ENCODE measurements at regions of chr2 and their contacts with region 1.

Region 1: DNA sequence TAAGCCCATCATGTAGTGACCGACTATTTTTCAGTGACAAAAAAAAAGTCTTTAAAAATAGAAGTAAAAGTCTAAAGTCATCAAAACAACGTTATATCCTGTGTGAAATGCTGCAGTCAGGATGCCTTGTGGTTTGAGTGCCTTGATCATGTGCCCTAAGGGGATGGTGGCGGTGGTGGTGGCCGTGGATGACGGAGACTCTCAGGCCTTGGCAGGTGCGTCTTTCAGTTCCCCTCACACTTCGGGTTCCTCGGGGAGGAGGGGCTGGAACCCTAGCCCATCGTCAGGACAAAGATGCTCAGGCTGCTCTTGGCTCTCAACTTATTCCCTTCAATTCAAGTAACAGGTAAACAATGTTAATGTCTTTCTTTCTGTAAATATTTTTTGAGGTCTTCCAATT is at the start of gene CD28:
- DNase-seq: peak; percentile 82 to 95
- ATAC-seq: peak; percentile 94 to 100 (median 95)
- H3K4me3 ChIP-seq: peak within 1 kb of the TSS; percentile 36
- H3K4me3 Mint-ChIP-seq: peak within 1 kb of the TSS; percentile 94
- H3K27ac ChIP-seq: peak within 1 kb of the TSS; percentile 61
- H3K27ac Mint-ChIP-seq: peak within 1 kb of the TSS; percentile 91 to 93
- H3K4me1 ChIP-seq: peaks cover 24% of the 10 kb centered on the region
- H3K4me1 Mint-ChIP-seq: peaks cover 30% of the 10 kb centered on the region in 2 donors
- H3K27me3 ChIP-seq: no peaks in the 10 kb centered on the region
- H3K27me3 Mint-ChIP-seq: peaks cover 0 to 8% of the 10 kb centered on the region in 2 donors
- CTCF ChIP-seq: no peak
- total RNA-seq, gene CD28: 0.54 to 3.5 (median 3.3) TPM

Region 2: DNA sequence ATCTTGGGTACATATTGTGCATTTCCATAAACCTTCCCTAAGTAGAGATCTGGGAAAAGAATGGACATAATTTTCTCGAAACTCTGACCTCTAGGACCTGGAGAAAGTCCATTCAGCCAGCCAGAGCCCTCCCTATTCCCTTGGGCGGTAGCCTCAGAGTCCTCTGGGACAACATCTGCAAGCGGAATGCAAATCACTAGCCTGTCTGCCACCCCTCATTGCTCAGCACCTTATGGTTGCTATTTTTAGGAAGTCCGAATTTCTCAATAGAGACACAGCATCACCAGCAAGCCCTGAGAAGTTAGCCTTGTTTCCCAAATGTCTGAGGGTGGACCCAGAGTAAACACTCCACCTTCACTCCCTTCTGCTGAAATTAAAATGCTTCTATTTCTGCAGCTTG is 17.6 kb before region 1 on chr2:
- intact Hi-C with region 1: loop called (anchors 1 kb)
- DNase-seq: no peak
- ATAC-seq: no peak
- H3K4me3 ChIP-seq: no peak overlapping the region
- H3K4me3 Mint-ChIP-seq: no peak overlapping the region
- H3K27ac ChIP-seq: no peak overlapping the region
- H3K27ac Mint-ChIP-seq: no peak overlapping the region
- H3K4me1 ChIP-seq: peaks cover 15% of the 10 kb centered on the region
- H3K4me1 Mint-ChIP-seq: peaks cover 25 to 28% of the 10 kb centered on the region in 2 donors
- H3K27me3 ChIP-seq: peaks cover 13% of the 10 kb centered on the region
- H3K27me3 Mint-ChIP-seq: peaks cover 31 to 68% of the 10 kb centered on the region in 2 donors
- CTCF ChIP-seq: no peak

Region 3: DNA sequence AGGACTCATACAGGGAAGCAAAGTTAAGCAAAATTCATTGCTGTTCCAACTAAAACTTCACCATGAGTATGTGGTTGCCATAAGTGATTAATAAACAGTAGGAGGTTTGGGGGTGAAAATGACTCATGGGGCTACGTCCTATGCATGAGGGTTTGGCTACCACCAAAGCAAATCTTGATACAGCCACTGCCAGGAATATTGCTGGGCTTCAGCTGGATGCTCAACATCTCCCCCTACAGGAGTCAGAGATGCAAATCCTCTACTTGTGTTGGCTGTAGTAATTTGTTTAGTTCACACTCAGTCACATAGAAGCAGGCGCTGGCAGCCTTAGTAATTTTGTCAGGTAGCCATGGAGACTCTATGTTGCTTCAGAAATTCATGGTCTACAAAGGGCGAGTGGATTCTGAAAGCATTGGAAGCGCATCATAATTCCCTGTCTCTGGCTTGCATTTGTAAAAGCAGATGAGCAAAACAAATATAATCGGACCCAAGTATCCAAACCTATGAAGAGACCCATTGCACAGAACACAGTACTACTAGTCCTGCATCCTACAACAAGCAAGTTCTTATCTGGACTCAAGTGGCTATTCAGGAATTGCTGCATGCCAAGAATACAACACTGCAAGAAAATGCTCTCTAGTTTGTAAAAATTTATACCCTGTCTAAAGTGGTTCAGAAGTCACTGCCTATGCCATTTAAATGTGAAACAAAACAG is 76.0 kb after region 1 on chr2:
- intact Hi-C with region 1: loop called (anchors 5 kb)
- DNase-seq: peak in 1 of 2 donors; percentile 87
- ATAC-seq: peak; percentile 55 to 86 (median 77)
- H3K4me3 ChIP-seq: no peak overlapping the region
- H3K4me3 Mint-ChIP-seq: no peak overlapping the region
- H3K27ac ChIP-seq: no peak overlapping the region
- H3K27ac Mint-ChIP-seq: peak overlapping the region in 1 of 2 donors; percentile 76
- H3K4me1 ChIP-seq: peaks cover 21% of the 10 kb centered on the region
- H3K4me1 Mint-ChIP-seq: peaks cover 26 to 27% of the 10 kb centered on the region in 2 donors
- H3K27me3 ChIP-seq: no peaks in the 10 kb centered on the region
- H3K27me3 Mint-ChIP-seq: no peaks in the 10 kb centered on the region
- CTCF ChIP-seq: peak; percentile 76

Measured in natural killer cell (primary cell).